GM13977 (cell line): ENCODE measurements at regions of chr19 and their contacts with region 1.

Region 1: DNA sequence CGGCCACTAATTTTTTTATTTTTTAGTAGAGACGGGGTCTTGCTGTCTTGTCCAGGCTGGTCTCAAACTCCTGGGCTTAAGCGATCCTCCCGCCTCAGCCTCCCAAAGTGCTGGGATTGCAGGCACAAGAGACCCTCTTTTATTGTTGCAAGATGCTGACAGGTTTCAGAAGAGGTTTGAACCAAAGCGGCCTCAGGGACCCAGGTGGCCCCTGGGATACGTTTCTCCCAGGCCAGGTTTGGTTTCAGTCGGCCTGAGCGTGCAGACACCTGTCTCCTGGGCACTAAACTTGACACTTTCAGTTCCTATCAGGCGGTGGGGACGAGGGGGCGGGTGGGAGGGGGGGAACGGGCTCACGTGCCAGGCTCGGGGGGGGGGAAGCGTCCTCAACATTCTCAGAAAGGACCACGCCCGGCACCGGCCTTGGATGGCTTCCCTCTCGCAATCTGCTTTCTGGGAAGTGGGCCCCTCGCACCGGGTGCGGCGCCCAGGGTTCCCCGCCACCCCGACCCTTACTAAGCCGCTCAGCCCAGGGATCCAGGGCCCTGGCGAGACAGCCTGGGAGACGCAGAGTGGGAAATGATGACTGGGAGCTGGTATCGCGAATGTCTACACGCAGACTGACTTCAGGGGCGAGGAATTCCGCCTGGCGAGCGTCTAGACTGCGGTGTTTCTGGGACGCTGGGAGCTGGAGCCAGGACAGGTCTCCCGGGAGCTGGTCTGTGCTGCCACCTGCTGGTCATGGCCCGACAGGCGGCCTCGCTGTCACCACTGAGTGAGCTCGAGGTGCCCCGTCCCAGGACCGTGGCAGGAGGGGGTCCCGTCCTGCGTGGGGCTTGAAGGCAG is 91.6 kb downstream of the GNG7 start:
- DNase-seq: no peak
- CTCF ChIP-seq: peak; percentile 98

Region 2: DNA sequence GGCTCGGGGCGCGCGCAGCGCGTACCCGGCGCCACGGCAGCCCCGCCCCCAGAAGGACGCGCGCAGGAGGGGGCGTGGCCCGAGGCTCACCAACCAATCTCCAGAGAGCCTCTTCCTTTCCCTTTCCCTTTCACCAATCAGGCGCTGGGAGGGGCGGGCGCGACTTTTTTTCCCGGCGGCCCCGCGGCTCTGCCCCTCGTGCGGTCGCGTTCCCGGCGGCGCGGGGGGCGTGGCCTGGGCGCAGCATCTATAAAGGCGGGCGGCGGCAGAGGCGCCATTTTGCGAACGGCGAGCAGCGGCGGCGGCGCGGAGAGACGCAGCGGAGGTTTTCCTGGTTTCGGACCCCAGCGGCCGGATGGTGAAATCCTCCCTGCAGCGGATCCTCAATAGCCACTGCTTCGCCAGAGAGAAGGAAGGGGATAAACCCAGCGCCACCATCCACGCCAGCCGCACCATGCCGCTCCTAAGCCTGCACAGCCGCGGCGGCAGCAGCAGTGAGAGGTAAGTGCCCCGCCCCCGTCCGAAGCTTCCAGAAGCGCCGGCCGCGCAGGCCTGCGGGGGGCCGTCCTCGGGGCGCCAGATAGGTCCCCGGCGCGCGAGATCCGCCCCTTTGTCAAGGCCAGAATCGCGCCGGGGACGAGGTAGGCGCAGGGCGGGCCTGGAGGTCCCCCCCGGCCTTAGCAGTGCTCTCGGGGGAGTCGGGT is 341.5 kb before region 1 on chr19:
- in situ Hi-C with region 1: loop called (anchors 25 kb)
- DNase-seq: peak; percentile 100
- CTCF ChIP-seq: peak; percentile 15

Region 3: GRCh38 chr19:2474232-2475017 is 136.4 kb before region 1 on chr19:
- in situ Hi-C with region 1: loop called (anchors 5 kb)
- DNase-seq: peak; percentile 90
- CTCF ChIP-seq: peak; percentile 97